Thyroid gland (tissue), 4 donors: ENCODE measurements at regions of chr3 and their contacts with region 1.

Region 1: GRCh38 chr3:149536429-149536828 is 61.9 kb downstream of the TM4SF4 start:
- DNase-seq: peak; percentile 94 to 97
- H3K4me3 ChIP-seq: no peak overlapping the region
- H3K27ac ChIP-seq: peak overlapping the region; percentile 80 to 95 (median 84)
- H3K4me1 ChIP-seq: peaks cover 43 to 85% of the 10 kb centered on the region in 2 donors
- H3K27me3 ChIP-seq: no peaks in the 10 kb centered on the region
- CTCF ChIP-seq: no peak
- POLR2A ChIP-seq: no peak

Region 2: GRCh38 chr3:149581681-149582370 is 45.4 kb after region 1 on chr3:
- intact Hi-C with region 1: loop called (anchors 10 kb)
- DNase-seq: peak; percentile 70 to 75
- H3K4me3 ChIP-seq: no peak overlapping the region
- H3K27ac ChIP-seq: peak overlapping the region; percentile 6 to 68 (median 46)
- H3K4me1 ChIP-seq: peaks cover 39 to 63% of the 10 kb centered on the region in 2 donors
- H3K27me3 ChIP-seq: no peaks in the 10 kb centered on the region
- CTCF ChIP-seq: peak in 2 of 6 experiments; percentile 4 to 31
- POLR2A ChIP-seq: no peak